Naive thymus-derived CD4-positive, alpha-beta T cell (primary cell): ENCODE measurements at regions of chr6 and their contacts with region 1.

Region 1: GRCh38 chr6:145086197-145086596 is 649.1 kb downstream of the EPM2A start:
- DNase-seq: no peak
- ATAC-seq: no peak
- H3K4me3 ChIP-seq: no peak overlapping the region
- H3K4me3 Mint-ChIP-seq: no peak overlapping the region
- H3K27ac ChIP-seq: no peak overlapping the region
- H3K27ac Mint-ChIP-seq: no peak overlapping the region
- H3K4me1 ChIP-seq: no peaks in the 10 kb centered on the region
- H3K4me1 Mint-ChIP-seq: peaks cover 0 to 1% (median 0%) of the 10 kb centered on the region in 7 donors
- H3K27me3 ChIP-seq: no peaks in the 10 kb centered on the region
- H3K27me3 Mint-ChIP-seq: peaks cover 5 to 12% (median 6%) of the 10 kb centered on the region in 5 donors

Region 2: DNA sequence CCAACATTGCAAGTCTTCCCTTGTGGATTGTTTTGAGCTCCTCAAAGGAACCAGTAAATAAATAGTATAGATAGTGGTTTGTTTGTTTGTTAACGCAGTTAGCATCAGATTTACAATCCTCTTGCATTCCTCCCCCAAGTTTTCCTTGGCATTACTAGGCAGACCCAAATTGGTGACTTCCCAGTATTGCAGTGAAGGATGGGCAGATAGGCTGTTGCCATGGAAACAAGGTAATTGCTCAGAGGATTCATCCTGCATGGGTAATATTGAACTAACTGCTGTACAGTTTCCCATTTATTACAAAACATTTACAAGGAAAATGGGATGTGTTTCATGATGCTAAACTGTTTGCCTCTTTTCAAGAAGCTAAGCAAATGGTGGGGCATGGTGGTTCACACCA is 171.9 kb after region 1 on chr6:
- CTCF ChIA-PET with region 1: no interaction called
- POLR2A ChIA-PET with region 1: no interaction called
- intact Hi-C with region 1: no loop called
- DNase-seq: no peak
- ATAC-seq: no peak
- H3K4me3 ChIP-seq: no peak overlapping the region
- H3K4me3 Mint-ChIP-seq: no peak overlapping the region
- H3K27ac ChIP-seq: no peak overlapping the region
- H3K27ac Mint-ChIP-seq: no peak overlapping the region
- H3K4me1 ChIP-seq: no peaks in the 10 kb centered on the region
- H3K4me1 Mint-ChIP-seq: no peaks in the 10 kb centered on the region
- H3K27me3 ChIP-seq: no peaks in the 10 kb centered on the region
- H3K27me3 Mint-ChIP-seq: peaks cover 0 to 16% (median 5%) of the 10 kb centered on the region in 5 donors

Region 3: DNA sequence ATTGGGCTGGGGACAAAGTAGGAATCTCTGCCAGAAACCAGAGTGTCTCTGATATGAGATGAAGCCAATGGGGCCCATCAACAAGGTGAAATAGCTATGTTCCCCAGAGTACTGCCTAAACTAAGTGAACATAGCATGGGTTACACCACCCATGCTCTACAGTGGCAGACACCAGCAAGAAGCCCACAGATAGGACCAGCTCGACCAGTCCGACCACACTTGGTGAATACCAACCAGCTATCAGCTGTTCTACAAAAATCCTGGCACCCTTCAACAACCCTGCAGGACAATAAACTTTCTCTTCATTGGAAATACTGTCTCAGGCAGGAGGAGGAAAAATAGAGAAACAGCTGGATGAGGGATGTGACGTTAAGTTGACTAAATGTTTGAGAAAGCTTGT is 337.7 kb after region 1 on chr6:
- CTCF ChIA-PET with region 1: no interaction called
- POLR2A ChIA-PET with region 1: no interaction called
- intact Hi-C with region 1: no loop called
- DNase-seq: no peak
- ATAC-seq: no peak
- H3K4me3 ChIP-seq: no peak overlapping the region
- H3K4me3 Mint-ChIP-seq: no peak overlapping the region
- H3K27ac ChIP-seq: no peak overlapping the region
- H3K27ac Mint-ChIP-seq: no peak overlapping the region
- H3K4me1 ChIP-seq: no peaks in the 10 kb centered on the region
- H3K4me1 Mint-ChIP-seq: no peaks in the 10 kb centered on the region
- H3K27me3 ChIP-seq: no peaks in the 10 kb centered on the region
- H3K27me3 Mint-ChIP-seq: peaks cover 0 to 18% (median 3%) of the 10 kb centered on the region in 5 donors

Region 4: GRCh38 chr6:146029573-146030184 is 943.5 kb after region 1 on chr6:
- CTCF ChIA-PET with region 1: no interaction called
- POLR2A ChIA-PET with region 1: no interaction called
- intact Hi-C with region 1: loop called in 1 of 2 experiments (anchors 5 kb)
- DNase-seq: no peak
- ATAC-seq: no peak
- H3K4me3 ChIP-seq: no peak overlapping the region
- H3K4me3 Mint-ChIP-seq: no peak overlapping the region
- H3K27ac ChIP-seq: no peak overlapping the region
- H3K27ac Mint-ChIP-seq: no peak overlapping the region
- H3K4me1 ChIP-seq: no peaks in the 10 kb centered on the region
- H3K4me1 Mint-ChIP-seq: peaks cover 0 to 10% (median 5%) of the 10 kb centered on the region in 7 donors
- H3K27me3 ChIP-seq: peaks cover 4 to 22% of the 10 kb centered on the region in 2 donors
- H3K27me3 Mint-ChIP-seq: peaks cover 41 to 75% (median 66%) of the 10 kb centered on the region in 5 donors